B cell (primary cell): ENCODE measurements at regions of chr6 and their contacts with region 1.

Region 1: GRCh38 chr6:12605888-12606345 is 110.7 kb upstream of the PHACTR1 start:
- DNase-seq: peak; percentile 76
- ATAC-seq: peak; percentile 83
- H3K4me3 ChIP-seq: peak overlapping the region in 3 of 5 experiments; percentile 32 to 50 (median 45)
- H3K4me3 Mint-ChIP-seq: peak overlapping the region; percentile 69
- H3K27ac ChIP-seq: no peak overlapping the region
- H3K27ac Mint-ChIP-seq: peak overlapping the region; percentile 33
- H3K4me1 ChIP-seq: peaks cover 12 to 20% of the 10 kb centered on the region in 2 donors
- H3K4me1 Mint-ChIP-seq: peaks cover 35% of the 10 kb centered on the region
- H3K27me3 ChIP-seq: peaks cover 0 to under 1% (median 0%) of the 10 kb centered on the region in 4 experiments
- H3K27me3 Mint-ChIP-seq: no peaks in the 10 kb centered on the region
- CTCF ChIP-seq: peak; percentile 80

Region 2: DNA sequence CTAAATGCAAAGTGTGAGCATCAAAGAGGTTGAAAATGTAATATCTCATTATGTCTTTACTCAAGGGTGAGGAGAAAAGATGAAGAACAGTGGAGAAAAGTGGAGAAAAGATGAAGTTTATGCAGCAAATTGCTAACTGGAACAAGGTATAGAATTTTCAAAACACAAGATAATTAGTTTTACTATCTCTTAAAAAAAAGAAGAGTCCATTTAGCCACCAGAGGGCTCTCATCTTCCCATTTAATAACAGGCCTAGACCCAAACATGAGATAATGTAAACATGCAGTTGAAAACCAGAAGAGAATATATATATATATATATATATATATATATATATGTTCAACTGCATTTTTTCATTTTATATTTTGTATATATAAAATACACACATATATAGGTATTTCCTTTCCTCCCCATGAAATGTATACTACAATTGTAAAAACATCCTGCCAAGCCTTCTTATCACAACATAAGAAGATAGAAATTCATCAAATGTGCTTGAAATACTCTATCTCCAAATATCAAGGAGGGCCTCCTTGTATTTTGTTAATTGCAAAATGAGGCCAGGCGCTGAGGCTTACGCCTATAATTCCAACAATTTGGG is 905.7 kb before region 1 on chr6:
- CTCF ChIA-PET with region 1: interaction called, 4 read pairs
- POLR2A ChIA-PET with region 1: no interaction called
- intact Hi-C with region 1: loop called (anchors 1 kb)
- DNase-seq: peak; percentile 61
- ATAC-seq: no peak
- H3K4me3 ChIP-seq: no peak overlapping the region
- H3K4me3 Mint-ChIP-seq: no peak overlapping the region
- H3K27ac ChIP-seq: no peak overlapping the region
- H3K27ac Mint-ChIP-seq: no peak overlapping the region
- H3K4me1 ChIP-seq: no peaks in the 10 kb centered on the region
- H3K4me1 Mint-ChIP-seq: no peaks in the 10 kb centered on the region
- H3K27me3 ChIP-seq: peaks cover 0 to 4% (median 2%) of the 10 kb centered on the region in 4 experiments
- H3K27me3 Mint-ChIP-seq: no peaks in the 10 kb centered on the region
- CTCF ChIP-seq: peak; percentile 69

Region 3: DNA sequence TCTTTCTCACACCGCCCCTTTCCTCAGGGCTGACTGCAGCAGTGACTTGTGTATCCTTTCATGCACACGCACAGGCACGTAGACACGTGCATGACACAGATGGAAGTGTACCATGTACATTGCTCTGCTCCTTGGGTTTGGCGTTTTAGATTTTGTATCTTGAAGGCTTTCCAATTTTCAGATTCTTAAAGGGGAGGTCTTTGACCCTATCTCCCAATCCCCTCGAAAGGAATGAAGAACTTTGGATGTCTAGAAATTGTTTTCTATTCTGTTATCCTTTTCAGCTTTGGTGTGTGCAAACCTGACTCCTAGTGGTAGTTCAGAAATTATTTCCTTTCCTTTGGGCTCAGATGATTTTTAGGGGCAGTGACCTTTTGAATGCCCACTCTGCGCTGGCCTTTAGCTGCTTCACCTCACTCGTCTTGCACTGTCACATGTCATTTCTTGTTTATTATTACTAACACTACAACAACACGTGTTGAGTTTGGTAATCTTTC is 530.8 kb before region 1 on chr6:
- CTCF ChIA-PET with region 1: no interaction called
- POLR2A ChIA-PET with region 1: no interaction called
- intact Hi-C with region 1: loop called (anchors 10 kb)
- DNase-seq: peak; percentile 43
- ATAC-seq: no peak
- H3K4me3 ChIP-seq: no peak overlapping the region
- H3K4me3 Mint-ChIP-seq: no peak overlapping the region
- H3K27ac ChIP-seq: no peak overlapping the region
- H3K27ac Mint-ChIP-seq: no peak overlapping the region
- H3K4me1 ChIP-seq: peaks cover 0 to 6% of the 10 kb centered on the region in 2 donors
- H3K4me1 Mint-ChIP-seq: peaks cover 25% of the 10 kb centered on the region
- H3K27me3 ChIP-seq: no peaks in the 10 kb centered on the region
- H3K27me3 Mint-ChIP-seq: no peaks in the 10 kb centered on the region
- CTCF ChIP-seq: peak; percentile 69

Region 4: GRCh38 chr6:12233693-12234571 is 372.0 kb before region 1 on chr6:
- CTCF ChIA-PET with region 1: interaction called, 14 read pairs
- POLR2A ChIA-PET with region 1: no interaction called
- intact Hi-C with region 1: loop called (anchors 5 kb)
- DNase-seq: peak; percentile 75
- ATAC-seq: peak; percentile 77
- H3K4me3 ChIP-seq: no peak overlapping the region
- H3K4me3 Mint-ChIP-seq: no peak overlapping the region
- H3K27ac ChIP-seq: no peak overlapping the region
- H3K27ac Mint-ChIP-seq: no peak overlapping the region
- H3K4me1 ChIP-seq: peaks cover 0 to 5% of the 10 kb centered on the region in 2 donors
- H3K4me1 Mint-ChIP-seq: peaks cover 10% of the 10 kb centered on the region
- H3K27me3 ChIP-seq: no peaks in the 10 kb centered on the region
- H3K27me3 Mint-ChIP-seq: no peaks in the 10 kb centered on the region
- CTCF ChIP-seq: peak; percentile 77

Region 5: DNA sequence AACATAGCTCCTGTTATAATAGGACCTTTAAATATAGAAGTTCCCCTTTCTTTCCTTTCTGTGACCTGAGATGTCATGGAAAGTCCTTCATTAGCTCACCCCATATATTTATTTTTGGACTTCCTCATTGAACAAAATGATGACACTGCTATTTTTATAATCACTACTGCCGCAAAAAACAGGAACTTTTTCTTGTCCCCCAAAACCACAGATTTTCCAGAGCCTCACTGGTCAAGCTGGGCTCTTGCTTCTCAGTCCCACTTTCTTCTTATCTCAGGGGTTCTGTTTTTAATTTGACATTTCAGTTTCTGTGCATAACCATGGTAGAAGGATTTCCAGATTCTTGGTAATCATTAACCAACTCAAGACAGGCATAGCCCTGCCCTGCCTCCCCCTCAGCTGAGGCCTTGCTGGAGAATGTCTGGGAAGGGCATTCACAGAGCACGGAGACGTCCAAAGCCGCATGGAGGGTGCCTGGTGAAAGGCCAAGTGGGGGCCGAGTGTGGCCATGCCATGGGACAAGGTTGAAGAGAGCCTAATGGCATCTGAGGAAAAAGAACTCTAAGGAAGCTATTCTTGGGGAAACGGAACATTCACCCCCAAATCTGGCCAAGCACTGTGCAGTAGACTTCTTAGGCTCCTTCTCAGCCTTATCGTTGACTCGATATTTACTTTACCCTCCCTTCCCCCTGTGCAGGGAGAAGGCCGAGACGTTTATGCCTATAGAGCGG is 242.1 kb before region 1 on chr6:
- CTCF ChIA-PET with region 1: no interaction called
- POLR2A ChIA-PET with region 1: no interaction called
- intact Hi-C with region 1: loop called (anchors 10 kb)
- DNase-seq: peak; percentile 44
- ATAC-seq: peak; percentile 39
- H3K4me3 ChIP-seq: no peak overlapping the region
- H3K4me3 Mint-ChIP-seq: peak overlapping the region; percentile 49
- H3K27ac ChIP-seq: peak overlapping the region in 1 of 2 donors; percentile 20
- H3K27ac Mint-ChIP-seq: peak overlapping the region; percentile 72
- H3K4me1 ChIP-seq: peaks cover 33 to 41% of the 10 kb centered on the region in 2 donors
- H3K4me1 Mint-ChIP-seq: peaks cover 9% of the 10 kb centered on the region
- H3K27me3 ChIP-seq: no peaks in the 10 kb centered on the region
- H3K27me3 Mint-ChIP-seq: no peaks in the 10 kb centered on the region
- CTCF ChIP-seq: no peak